Vagina (tissue), 2 donors: ENCODE measurements at regions of chr11 and their contacts with region 1.

Region 1: DNA sequence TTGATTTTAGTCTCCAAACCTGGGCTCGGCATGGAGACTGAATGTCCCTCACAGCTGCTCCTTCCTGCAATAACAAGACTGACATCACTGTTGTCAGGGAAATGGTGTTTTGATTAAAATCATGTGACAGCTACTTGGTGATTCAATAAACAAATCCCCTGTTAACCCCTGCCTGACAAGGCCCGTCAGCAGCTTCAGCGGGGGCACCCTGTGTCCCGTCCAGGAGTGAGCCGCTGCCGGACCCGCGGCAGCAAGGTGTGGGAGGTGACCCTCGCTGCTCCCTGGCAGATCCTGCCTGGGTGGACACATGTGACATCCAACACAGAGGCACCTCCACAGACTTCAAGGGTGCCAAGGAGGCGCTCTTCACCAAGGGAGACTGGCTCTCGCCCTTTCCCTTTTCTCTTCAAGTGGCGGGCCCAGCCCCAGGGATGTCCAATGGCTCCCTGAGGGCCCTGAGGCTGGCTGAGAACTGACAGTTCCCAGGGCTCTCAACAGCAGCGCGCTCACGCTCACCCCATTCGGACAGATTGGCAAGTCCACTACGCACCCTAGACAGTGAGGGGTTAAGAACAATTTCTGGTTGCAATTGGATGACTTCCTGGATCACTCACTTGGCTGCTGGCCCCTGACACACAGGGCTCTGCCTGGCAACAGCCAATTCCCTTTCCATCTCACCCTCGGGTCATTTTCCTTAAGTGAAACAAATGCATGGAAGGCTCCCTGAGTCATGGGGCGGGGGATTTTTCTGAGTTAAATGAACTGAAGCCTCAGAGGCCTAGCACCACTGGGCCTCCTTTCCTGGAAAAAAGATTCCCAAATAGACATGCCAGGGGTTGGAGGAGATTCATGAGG is 30.7 kb downstream of the PPP2R1B start:
- DNase-seq: peak in 1 of 2 donors; percentile 96
- H3K4me3 ChIP-seq: peak overlapping the region; percentile 37 to 42
- H3K27ac ChIP-seq: peak overlapping the region; percentile 95
- H3K4me1 ChIP-seq: peaks cover 65% of the 10 kb centered on the region
- H3K27me3 ChIP-seq: no peaks in the 10 kb centered on the region
- CTCF ChIP-seq: no peak
- POLR2A ChIP-seq: peak in 1 of 2 donors; percentile 47

Region 2: DNA sequence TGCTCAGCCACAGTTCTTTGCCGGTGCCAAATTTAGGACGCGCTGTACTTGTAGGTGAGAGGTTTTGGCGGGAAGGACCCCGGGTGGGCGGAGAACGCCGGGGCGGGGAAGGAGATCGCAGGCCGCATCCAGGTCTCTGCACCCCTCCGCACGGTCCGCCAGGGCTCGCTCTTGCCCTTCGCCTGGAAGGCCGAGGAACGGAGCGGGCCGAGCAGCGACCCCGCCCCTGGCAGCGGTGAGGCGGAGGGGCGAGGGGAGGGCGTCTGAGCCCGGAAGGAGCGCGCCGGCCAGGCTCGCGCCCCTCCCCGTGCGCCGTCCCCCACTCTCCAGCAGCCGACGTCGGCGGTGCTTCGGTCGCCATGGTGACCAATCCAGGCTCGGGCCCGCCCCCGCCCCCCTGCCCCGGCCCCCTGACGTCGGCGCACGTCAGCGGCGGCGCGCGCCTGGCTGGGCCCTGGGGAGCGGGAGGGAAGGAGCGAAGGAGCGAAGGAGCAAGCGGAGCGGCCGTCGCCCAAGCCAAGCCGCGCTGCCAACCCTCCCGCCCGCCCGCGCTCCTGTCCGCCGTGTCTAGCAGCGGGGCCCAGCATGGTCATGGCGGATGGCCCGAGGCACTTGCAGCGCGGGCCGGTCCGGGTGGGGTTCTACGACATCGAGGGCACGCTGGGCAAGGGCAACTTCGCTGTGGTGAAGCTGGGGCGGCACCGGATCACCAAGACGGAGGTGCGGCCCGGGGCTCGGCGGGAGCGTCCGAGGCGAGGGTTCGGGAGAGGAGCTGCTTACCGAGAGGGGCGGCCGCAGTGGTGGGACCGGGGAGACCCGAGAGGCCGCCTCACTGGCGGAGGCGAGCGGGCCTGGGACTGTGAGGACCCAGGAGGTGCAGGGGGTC is 133.3 kb before region 1 on chr11 and contains the start of gene SIK2:
- intact Hi-C with region 1: loop called (anchors 2 kb)
- DNase-seq: peak in 1 of 2 donors; percentile 97
- H3K4me3 ChIP-seq: peak within 1 kb of the TSS; percentile 66 to 77
- H3K27ac ChIP-seq: peak within 1 kb of the TSS; percentile 94
- H3K4me1 ChIP-seq: peaks cover 33% of the 10 kb centered on the region
- H3K27me3 ChIP-seq: no peaks in the 10 kb centered on the region
- CTCF ChIP-seq: peak; percentile 60 to 95 (median 93)
- POLR2A ChIP-seq: no peak
- total RNA-seq, gene SIK2: 16.7 TPM